Activated naive CD8-positive, alpha-beta T cell treated with anti-CD3 and anti-CD28 coated beads, Interleukin-2, amount 10 ng/mL, durations not matched to agents 7 days and 5 days (primary cell): ENCODE measurements at regions of chr19 and their contacts with region 1.

Region 1: GRCh38 chr19:17305517-17306284 is at the start of gene MRPL34:
- DNase-seq: peak; percentile 92
- ATAC-seq: peak; percentile 74
- H3K4me3 Mint-ChIP-seq: peak within 1 kb of the TSS; percentile 91
- H3K27ac Mint-ChIP-seq: peak within 1 kb of the TSS; percentile 89
- H3K4me1 Mint-ChIP-seq: peaks cover 37% of the 10 kb centered on the region
- H3K27me3 Mint-ChIP-seq: no peaks in the 10 kb centered on the region
- total RNA-seq, gene MRPL34: 88.0 to 92.8 TPM

Region 2: GRCh38 chr19:17205237-17206140 is 100.2 kb before region 1 on chr19:
- POLR2A ChIA-PET with region 1: no interaction called
- DNase-seq: peak; percentile 52
- ATAC-seq: peak; percentile 69
- H3K4me3 Mint-ChIP-seq: no peak overlapping the region
- H3K27ac Mint-ChIP-seq: no peak overlapping the region
- H3K4me1 Mint-ChIP-seq: peaks cover 7% of the 10 kb centered on the region
- H3K27me3 Mint-ChIP-seq: no peaks in the 10 kb centered on the region

Region 3: DNA sequence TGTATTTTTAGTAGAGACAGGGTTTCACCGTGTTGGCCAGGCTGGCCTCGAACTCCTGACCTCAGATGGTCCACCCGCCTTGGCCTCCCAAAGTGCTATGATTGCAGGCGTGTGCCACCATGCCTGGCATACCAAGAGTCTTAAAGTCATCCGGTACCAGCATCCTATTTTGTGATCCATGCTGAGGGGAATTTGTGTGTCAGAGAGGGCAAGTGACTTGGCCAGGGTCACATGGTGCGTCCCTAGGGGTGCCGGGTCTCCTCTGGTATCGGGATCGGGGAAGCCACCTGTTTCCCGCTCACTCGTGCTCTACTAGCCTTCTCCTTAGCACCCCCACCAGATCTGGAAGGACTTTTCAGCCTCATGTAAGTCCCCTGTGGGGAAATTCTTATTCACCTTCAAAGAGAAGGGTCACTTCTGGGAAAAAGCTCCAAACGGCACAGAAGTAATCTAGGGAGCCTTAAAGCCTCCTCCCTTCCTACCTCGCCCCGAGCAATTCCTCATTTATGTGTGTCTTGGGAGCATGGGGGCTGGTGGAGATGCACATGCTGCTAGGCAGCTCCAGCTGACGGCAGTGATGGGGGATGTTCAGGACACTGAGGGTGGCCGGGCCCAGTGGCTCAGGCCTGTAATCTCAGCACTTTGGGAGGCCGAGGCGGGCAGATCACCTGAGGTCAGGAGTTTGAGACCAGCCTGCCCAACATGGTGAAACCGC is 30.1 kb before region 1 on chr19:
- POLR2A ChIA-PET with region 1: no interaction called
- DNase-seq: no peak
- ATAC-seq: no peak
- H3K4me3 Mint-ChIP-seq: no peak overlapping the region
- H3K27ac Mint-ChIP-seq: no peak overlapping the region
- H3K4me1 Mint-ChIP-seq: peaks cover 2% of the 10 kb centered on the region
- H3K27me3 Mint-ChIP-seq: no peaks in the 10 kb centered on the region

Region 4: DNA sequence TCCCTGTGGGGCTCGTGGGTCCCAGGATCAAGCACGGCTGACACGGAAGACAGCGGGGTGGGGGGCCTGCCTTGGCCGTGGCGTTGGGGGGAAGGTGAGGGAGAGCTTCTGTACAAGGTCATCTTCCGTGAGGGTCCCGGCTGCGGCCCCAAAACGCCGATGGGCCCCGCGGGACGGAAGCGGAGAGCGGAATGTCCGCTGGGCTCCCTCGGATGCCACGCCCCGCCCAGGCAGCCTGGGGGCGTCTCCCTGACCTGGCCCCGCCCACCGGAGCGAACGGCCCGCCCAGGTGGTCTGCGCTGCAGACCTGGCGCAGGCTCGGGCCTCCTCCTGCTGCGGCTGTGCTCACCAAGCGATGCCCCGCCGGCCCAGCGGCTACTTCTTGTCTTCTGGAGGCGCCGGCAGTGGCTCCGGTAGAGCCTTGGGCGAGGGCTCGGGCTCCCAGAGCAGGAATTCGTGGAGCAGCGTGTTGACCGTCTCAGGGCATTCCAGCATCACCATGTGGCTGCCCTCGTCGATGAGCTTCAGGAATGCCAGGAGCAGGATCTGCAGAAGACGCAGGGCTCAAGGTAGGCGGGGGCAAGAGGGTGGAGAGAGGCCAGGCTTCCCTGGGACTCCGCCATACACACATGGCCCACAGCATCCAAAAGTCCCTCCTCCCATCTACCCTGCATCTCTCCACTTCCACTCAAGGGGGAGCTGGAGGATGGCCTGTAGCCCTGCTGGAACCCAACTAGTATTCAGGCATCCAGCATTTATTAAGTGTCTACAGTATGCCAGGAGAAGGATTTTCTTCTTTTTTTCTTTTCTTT is 13.2 kb before region 1 on chr19:
- POLR2A ChIA-PET with region 1: interaction called, 14 read pairs
- DNase-seq: peak; percentile 94
- ATAC-seq: peak; percentile 96
- H3K4me3 Mint-ChIP-seq: peak overlapping the region; percentile 85
- H3K27ac Mint-ChIP-seq: peak overlapping the region; percentile 74
- H3K4me1 Mint-ChIP-seq: peaks cover 10% of the 10 kb centered on the region
- H3K27me3 Mint-ChIP-seq: no peaks in the 10 kb centered on the region

Region 5: DNA sequence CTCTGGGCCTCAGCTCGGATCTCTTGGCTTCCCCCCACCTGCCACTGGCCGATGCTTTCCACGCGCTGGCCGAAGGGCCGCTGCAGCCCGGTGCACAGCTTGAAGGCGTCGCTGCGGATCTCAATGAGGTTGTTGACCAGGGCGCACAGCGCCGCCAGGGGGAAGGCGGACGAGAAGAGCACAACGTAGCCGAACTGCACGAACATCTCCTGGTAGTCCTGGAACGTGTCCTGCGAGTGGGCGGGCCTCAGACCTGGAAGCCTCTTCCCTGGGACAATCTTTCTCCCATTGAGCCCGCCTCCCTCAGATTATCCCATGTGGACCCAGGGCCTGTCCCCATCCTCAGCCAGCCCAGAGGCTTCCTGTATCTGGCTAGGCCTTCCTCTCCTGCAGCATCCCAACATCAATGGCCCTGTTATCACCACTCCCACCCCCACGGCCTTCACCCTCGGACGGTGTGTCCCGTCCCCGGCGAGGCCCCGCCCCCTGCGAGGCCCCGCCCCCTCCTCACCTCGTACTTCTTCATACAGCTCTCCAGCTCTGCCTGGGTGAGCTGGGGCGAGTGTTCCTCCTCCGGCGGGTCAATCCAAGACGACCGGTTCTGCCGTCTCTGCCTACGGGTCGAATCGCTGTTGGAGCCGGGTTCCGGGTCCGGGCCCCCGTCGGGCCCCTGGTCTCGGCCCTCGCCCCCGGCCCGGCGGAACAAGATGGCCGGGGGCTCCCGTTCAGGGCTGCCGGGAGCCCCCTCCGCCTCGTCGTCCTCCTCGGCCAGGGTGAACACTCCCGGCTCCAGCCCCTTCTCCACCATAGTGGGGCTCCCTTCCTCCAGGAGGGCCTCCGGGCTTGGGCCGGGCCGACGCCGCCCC is 22.2 kb after region 1 on chr19:
- POLR2A ChIA-PET with region 1: interaction called, 45 read pairs
- DNase-seq: peak; percentile 65
- ATAC-seq: peak; percentile 39
- H3K4me3 Mint-ChIP-seq: peak overlapping the region; percentile 60
- H3K27ac Mint-ChIP-seq: no peak overlapping the region
- H3K4me1 Mint-ChIP-seq: peaks cover 5% of the 10 kb centered on the region
- H3K27me3 Mint-ChIP-seq: peaks cover 5% of the 10 kb centered on the region

Region 6: GRCh38 chr19:17334414-17335409 is 29.0 kb after region 1 on chr19 and contains the start of gene ANO8:
- POLR2A ChIA-PET with region 1: interaction called, 45 read pairs
- DNase-seq: peak; percentile 95
- ATAC-seq: peak; percentile 61
- H3K4me3 Mint-ChIP-seq: peak within 1 kb of the TSS; percentile 91
- H3K27ac Mint-ChIP-seq: peak within 1 kb of the TSS; percentile 86
- H3K4me1 Mint-ChIP-seq: peaks cover 24% of the 10 kb centered on the region
- H3K27me3 Mint-ChIP-seq: peaks cover 5% of the 10 kb centered on the region
- total RNA-seq, gene ANO8: 19.5 to 23.1 TPM

Region 7: DNA sequence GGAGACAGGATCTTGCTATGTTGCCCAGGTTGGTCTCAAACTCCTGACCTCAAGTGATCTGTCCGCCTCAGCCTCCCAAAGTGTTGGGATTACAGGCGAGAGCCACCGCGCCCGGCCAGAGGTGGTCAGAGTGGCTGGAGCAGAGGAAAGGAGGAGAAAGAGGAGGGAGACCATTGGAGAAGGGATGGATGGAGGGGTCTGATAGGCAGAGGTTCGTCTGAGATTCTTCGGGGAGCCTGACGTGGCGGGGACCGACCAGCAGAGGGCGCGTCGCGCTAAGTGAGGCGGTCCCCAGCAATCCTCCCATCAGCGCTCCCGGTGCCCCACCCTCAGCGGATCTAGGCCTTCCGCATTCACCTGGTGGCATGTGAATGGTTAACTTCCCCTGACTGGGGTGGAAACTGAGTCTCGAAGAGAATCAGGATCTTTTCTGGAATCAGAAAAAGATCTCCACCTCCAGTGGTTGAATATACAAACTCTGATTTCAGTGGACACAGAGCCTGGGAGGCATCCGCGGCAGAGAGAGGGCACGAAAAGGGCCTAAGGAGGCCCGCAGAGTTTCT is 40.5 kb after region 1 on chr19:
- POLR2A ChIA-PET with region 1: no interaction called
- DNase-seq: peak; percentile 88
- ATAC-seq: peak; percentile 95
- H3K4me3 Mint-ChIP-seq: no peak overlapping the region
- H3K27ac Mint-ChIP-seq: peak overlapping the region; percentile 70
- H3K4me1 Mint-ChIP-seq: peaks cover 20% of the 10 kb centered on the region
- H3K27me3 Mint-ChIP-seq: peaks cover 27% of the 10 kb centered on the region